Aorta (tissue), 5 donors: ENCODE measurements at regions of chr12 and their contacts with region 1.

Region 1: GRCh38 chr12:120979862-120980696 is 1.7 kb downstream of the HNF1A start:
- DNase-seq: no peak
- ATAC-seq: no peak
- H3K4me3 ChIP-seq: no peak overlapping the region
- H3K27ac ChIP-seq: no peak overlapping the region
- H3K4me1 ChIP-seq: no peaks in the 10 kb centered on the region
- H3K27me3 ChIP-seq: no peaks in the 10 kb centered on the region

Region 2: GRCh38 chr12:120598674-120599463 is 381.2 kb before region 1 on chr12:
- intact Hi-C with region 1: loop called in 1 of 2 experiments (anchors 10 kb)
- DNase-seq: peak in 1 of 2 donors; percentile 53
- ATAC-seq: no peak
- H3K4me3 ChIP-seq: no peak overlapping the region
- H3K27ac ChIP-seq: no peak overlapping the region
- H3K4me1 ChIP-seq: no peaks in the 10 kb centered on the region
- H3K27me3 ChIP-seq: no peaks in the 10 kb centered on the region

Region 3: GRCh38 chr12:121170611-121171260 is 190.7 kb after region 1 on chr12:
- intact Hi-C with region 1: no loop called
- DNase-seq: no peak
- ATAC-seq: no peak
- H3K4me3 ChIP-seq: no peak overlapping the region
- H3K27ac ChIP-seq: no peak overlapping the region
- H3K4me1 ChIP-seq: no peaks in the 10 kb centered on the region
- H3K27me3 ChIP-seq: no peaks in the 10 kb centered on the region